CD4-positive, alpha-beta T cell (primary cell): ENCODE measurements at regions of chr4 and their contacts with region 1.

Region 1: GRCh38 chr4:142353149-142353738 is 492.9 kb downstream of the INPP4B start:
- DNase-seq: peak in 4 of 14 experiments; percentile 43 to 74 (median 64)
- ATAC-seq: peak; percentile 19
- H3K4me3 ChIP-seq: no peak overlapping the region
- H3K4me3 Mint-ChIP-seq: peak overlapping the region; percentile 52
- H3K27ac ChIP-seq: peak overlapping the region in 1 of 2 donors; percentile 72
- H3K27ac Mint-ChIP-seq: peak overlapping the region; percentile 89
- H3K4me1 ChIP-seq: peaks cover 45% of the 10 kb centered on the region
- H3K4me1 Mint-ChIP-seq: peaks cover 99% of the 10 kb centered on the region
- H3K27me3 ChIP-seq: no peaks in the 10 kb centered on the region
- H3K27me3 Mint-ChIP-seq: no peaks in the 10 kb centered on the region
- CTCF ChIP-seq: peak; percentile 97

Region 2: DNA sequence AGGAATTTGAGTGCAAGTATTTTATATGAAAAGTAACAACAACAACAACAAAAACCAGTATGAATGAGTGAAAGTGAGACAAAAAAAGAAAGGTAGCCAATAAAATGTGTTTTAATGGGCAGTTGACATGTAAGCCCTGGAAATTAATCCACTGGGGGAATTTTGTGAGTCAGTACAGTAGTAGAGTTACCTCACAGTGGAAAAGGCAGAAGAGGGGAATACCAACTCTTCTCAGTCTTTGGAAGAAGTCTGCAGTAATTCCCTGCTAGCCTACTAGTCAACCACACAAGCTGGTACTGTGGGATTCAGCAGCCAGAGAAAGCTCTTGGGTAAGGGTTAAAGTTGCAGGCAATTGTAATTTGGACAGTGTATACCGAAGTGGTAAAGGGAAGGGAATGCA is 793.2 kb before region 1 on chr4:
- CTCF ChIA-PET with region 1: no interaction called
- POLR2A ChIA-PET with region 1: no interaction called
- intact Hi-C with region 1: no loop called
- DNase-seq: no peak
- ATAC-seq: no peak
- H3K4me3 ChIP-seq: no peak overlapping the region
- H3K4me3 Mint-ChIP-seq: no peak overlapping the region
- H3K27ac ChIP-seq: no peak overlapping the region
- H3K27ac Mint-ChIP-seq: no peak overlapping the region
- H3K4me1 ChIP-seq: no peaks in the 10 kb centered on the region
- H3K4me1 Mint-ChIP-seq: no peaks in the 10 kb centered on the region
- H3K27me3 ChIP-seq: no peaks in the 10 kb centered on the region
- H3K27me3 Mint-ChIP-seq: no peaks in the 10 kb centered on the region
- CTCF ChIP-seq: no peak

Region 3: GRCh38 chr4:142112451-142112850 is 240.8 kb before region 1 on chr4:
- CTCF ChIA-PET with region 1: no interaction called
- POLR2A ChIA-PET with region 1: no interaction called
- intact Hi-C with region 1: no loop called
- DNase-seq: no peak
- ATAC-seq: no peak
- H3K4me3 ChIP-seq: no peak overlapping the region
- H3K4me3 Mint-ChIP-seq: no peak overlapping the region
- H3K27ac ChIP-seq: no peak overlapping the region
- H3K27ac Mint-ChIP-seq: no peak overlapping the region
- H3K4me1 ChIP-seq: no peaks in the 10 kb centered on the region
- H3K4me1 Mint-ChIP-seq: peaks cover 23% of the 10 kb centered on the region
- H3K27me3 ChIP-seq: no peaks in the 10 kb centered on the region
- H3K27me3 Mint-ChIP-seq: no peaks in the 10 kb centered on the region
- CTCF ChIP-seq: no peak

Region 4: GRCh38 chr4:142365387-142365786 is 12.1 kb after region 1 on chr4:
- CTCF ChIA-PET with region 1: interaction called, 5 read pairs
- POLR2A ChIA-PET with region 1: interaction called, 25 read pairs
- intact Hi-C with region 1: no loop called
- DNase-seq: no peak
- ATAC-seq: no peak
- H3K4me3 ChIP-seq: no peak overlapping the region
- H3K4me3 Mint-ChIP-seq: peak overlapping the region; percentile 8
- H3K27ac ChIP-seq: no peak overlapping the region
- H3K27ac Mint-ChIP-seq: peak overlapping the region; percentile 73
- H3K4me1 ChIP-seq: peaks cover 31% of the 10 kb centered on the region
- H3K4me1 Mint-ChIP-seq: peaks cover 84% of the 10 kb centered on the region
- H3K27me3 ChIP-seq: no peaks in the 10 kb centered on the region
- H3K27me3 Mint-ChIP-seq: no peaks in the 10 kb centered on the region
- CTCF ChIP-seq: no peak

Region 5: GRCh38 chr4:142396279-142396678 is 43.0 kb after region 1 on chr4:
- CTCF ChIA-PET with region 1: interaction called, 3 read pairs
- POLR2A ChIA-PET with region 1: interaction called, 10 read pairs
- intact Hi-C with region 1: loop called in 1 of 2 experiments (anchors 5 kb)
- DNase-seq: no peak
- ATAC-seq: no peak
- H3K4me3 ChIP-seq: peak overlapping the region; percentile 36
- H3K4me3 Mint-ChIP-seq: peak overlapping the region; percentile 64
- H3K27ac ChIP-seq: no peak overlapping the region
- H3K27ac Mint-ChIP-seq: peak overlapping the region; percentile 93
- H3K4me1 ChIP-seq: peaks cover 33% of the 10 kb centered on the region
- H3K4me1 Mint-ChIP-seq: peaks cover 92% of the 10 kb centered on the region
- H3K27me3 ChIP-seq: no peaks in the 10 kb centered on the region
- H3K27me3 Mint-ChIP-seq: no peaks in the 10 kb centered on the region
- CTCF ChIP-seq: no peak

Region 6: GRCh38 chr4:142416711-142417275 is 63.5 kb after region 1 on chr4:
- CTCF ChIA-PET with region 1: interaction called, 4 read pairs
- POLR2A ChIA-PET with region 1: interaction called, 17 read pairs
- intact Hi-C with region 1: no loop called
- DNase-seq: peak in 5 of 14 experiments; percentile 19 to 75 (median 57)
- ATAC-seq: peak; percentile 92
- H3K4me3 ChIP-seq: peak overlapping the region; percentile 36
- H3K4me3 Mint-ChIP-seq: peak overlapping the region; percentile 86
- H3K27ac ChIP-seq: peak overlapping the region; percentile 51 to 78
- H3K27ac Mint-ChIP-seq: peak overlapping the region; percentile 93
- H3K4me1 ChIP-seq: peaks cover 12% of the 10 kb centered on the region
- H3K4me1 Mint-ChIP-seq: peaks cover 47% of the 10 kb centered on the region
- H3K27me3 ChIP-seq: no peaks in the 10 kb centered on the region
- H3K27me3 Mint-ChIP-seq: no peaks in the 10 kb centered on the region
- CTCF ChIP-seq: no peak

Region 7: GRCh38 chr4:142719854-142720541 is 366.8 kb after region 1 on chr4:
- CTCF ChIA-PET with region 1: interaction called, 4 read pairs
- POLR2A ChIA-PET with region 1: interaction called, 5 read pairs
- intact Hi-C with region 1: loop called (anchors 1 to 2 kb)
- DNase-seq: peak in 4 of 14 experiments; percentile 18 to 68 (median 65)
- ATAC-seq: peak; percentile 73
- H3K4me3 ChIP-seq: no peak overlapping the region
- H3K4me3 Mint-ChIP-seq: peak overlapping the region; percentile 31
- H3K27ac ChIP-seq: no peak overlapping the region
- H3K27ac Mint-ChIP-seq: peak overlapping the region; percentile 71
- H3K4me1 ChIP-seq: peaks cover 8% of the 10 kb centered on the region
- H3K4me1 Mint-ChIP-seq: peaks cover 43% of the 10 kb centered on the region
- H3K27me3 ChIP-seq: no peaks in the 10 kb centered on the region
- H3K27me3 Mint-ChIP-seq: no peaks in the 10 kb centered on the region
- CTCF ChIP-seq: peak; percentile 86